Esophagus muscularis mucosa (tissue), 4 donors: ENCODE measurements at regions of chr4 and their contacts with region 1.

Region 1: GRCh38 chr4:140095694-140096482 is 58.1 kb downstream of the MAML3 start:
- DNase-seq: peak; percentile 89
- H3K4me3 ChIP-seq: peak overlapping the region in 1 of 4 donors; percentile 27
- H3K27ac ChIP-seq: peak overlapping the region; percentile 60 to 64 (median 62)
- H3K4me1 ChIP-seq: peaks cover 74 to 88% (median 84%) of the 10 kb centered on the region in 4 donors
- H3K27me3 ChIP-seq: no peaks in the 10 kb centered on the region
- CTCF ChIP-seq: no peak
- EP300 ChIP-seq: no peak
- POLR2A ChIP-seq: no peak

Region 2: DNA sequence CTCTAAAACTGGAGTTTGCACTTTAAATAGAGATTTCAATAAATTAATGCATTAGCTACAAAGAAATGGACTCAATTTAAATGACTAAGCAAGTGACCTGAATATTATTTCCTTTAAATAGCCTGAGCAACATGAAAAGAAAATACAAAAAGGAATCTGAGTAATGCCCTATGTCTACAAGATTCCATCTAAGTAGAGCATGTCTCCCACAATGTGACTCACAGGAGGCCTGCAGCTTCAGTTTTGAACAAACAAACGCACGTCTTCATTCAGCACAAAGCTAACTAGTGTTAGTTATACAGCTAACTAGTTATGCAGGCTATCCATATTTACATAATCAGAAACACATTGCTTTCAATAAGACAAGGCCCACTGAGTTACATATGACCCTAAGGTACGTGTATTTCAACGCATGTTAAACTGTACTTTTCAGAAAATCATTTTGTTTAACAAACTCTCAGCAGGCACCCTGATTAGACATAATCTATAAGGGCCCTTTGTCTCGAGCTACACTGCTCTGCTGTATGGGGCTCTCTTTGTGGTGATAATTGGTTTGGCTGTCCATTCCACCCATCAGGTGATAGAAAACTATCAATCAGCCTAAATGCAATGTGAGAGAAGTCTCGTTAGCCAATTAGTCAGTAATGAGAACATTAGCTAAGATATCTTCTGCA is 58.4 kb before region 1 on chr4:
- intact Hi-C with region 1: no loop called
- DNase-seq: no peak
- H3K4me3 ChIP-seq: no peak overlapping the region
- H3K27ac ChIP-seq: peak overlapping the region; percentile 15 to 66 (median 41)
- H3K4me1 ChIP-seq: peaks cover 4 to 26% (median 15%) of the 10 kb centered on the region in 4 donors
- H3K27me3 ChIP-seq: no peaks in the 10 kb centered on the region
- CTCF ChIP-seq: no peak
- EP300 ChIP-seq: no peak
- POLR2A ChIP-seq: no peak

Region 3: GRCh38 chr4:140052050-140052449 is 43.8 kb before region 1 on chr4:
- intact Hi-C with region 1: no loop called
- DNase-seq: no peak
- H3K4me3 ChIP-seq: no peak overlapping the region
- H3K27ac ChIP-seq: no peak overlapping the region
- H3K4me1 ChIP-seq: peaks cover 25 to 35% (median 31%) of the 10 kb centered on the region in 4 donors
- H3K27me3 ChIP-seq: no peaks in the 10 kb centered on the region
- CTCF ChIP-seq: peak; percentile 41 to 62 (median 53)
- EP300 ChIP-seq: no peak
- POLR2A ChIP-seq: no peak

Region 4: DNA sequence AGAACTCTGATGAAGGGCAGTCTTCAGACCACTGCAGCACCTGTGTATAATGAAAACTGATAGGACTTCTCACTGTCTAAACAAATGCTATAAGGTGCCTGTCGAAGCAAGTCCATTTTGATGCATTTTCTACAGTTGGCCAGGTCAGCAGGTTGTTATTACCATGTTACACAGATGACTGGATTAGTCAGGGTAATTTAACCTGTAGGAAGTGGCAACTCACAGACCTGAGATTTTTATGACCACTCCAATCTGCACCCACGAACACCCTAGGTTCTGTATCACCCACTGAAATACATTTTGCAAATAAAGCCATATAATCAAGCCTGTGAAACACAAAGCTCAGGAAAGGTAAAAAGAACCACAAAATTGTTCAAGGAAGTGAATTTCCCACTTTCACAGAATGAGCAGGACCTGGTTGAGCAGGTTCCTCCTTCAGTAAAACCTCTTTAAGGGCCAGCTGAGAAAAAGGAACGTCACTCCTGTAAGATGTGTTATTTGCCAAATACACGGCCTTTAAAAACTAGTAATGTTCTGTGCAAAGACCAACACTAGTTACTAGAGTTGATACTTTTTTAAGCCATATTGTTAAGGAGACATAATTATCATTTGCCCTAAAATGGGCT is 45.4 kb after region 1 on chr4:
- intact Hi-C with region 1: loop called (anchors 5 kb)
- DNase-seq: no peak
- H3K4me3 ChIP-seq: no peak overlapping the region
- H3K27ac ChIP-seq: no peak overlapping the region
- H3K4me1 ChIP-seq: peaks cover 0 to 5% (median 4%) of the 10 kb centered on the region in 4 donors
- H3K27me3 ChIP-seq: no peaks in the 10 kb centered on the region
- CTCF ChIP-seq: no peak
- EP300 ChIP-seq: no peak
- POLR2A ChIP-seq: no peak